Tibial artery (tissue), 4 donors: ENCODE measurements at regions of chr19 and their contacts with region 1.

Region 1: GRCh38 chr19:16324384-16325160 is at the start of gene KLF2:
- DNase-seq: peak; percentile 89 to 98
- H3K4me3 ChIP-seq: peak within 1 kb of the TSS; percentile 96 to 99
- H3K27ac ChIP-seq: peak within 1 kb of the TSS; percentile 99
- H3K4me1 ChIP-seq: peaks cover 0 to 39% (median 28%) of the 10 kb centered on the region in 4 donors
- H3K27me3 ChIP-seq: no peaks in the 10 kb centered on the region
- CTCF ChIP-seq: no peak

Region 2: GRCh38 chr19:16247353-16248182 is 77.0 kb before region 1 on chr19:
- intact Hi-C with region 1: loop called (anchors 5 kb)
- DNase-seq: peak; percentile 85 to 89
- H3K4me3 ChIP-seq: no peak overlapping the region
- H3K27ac ChIP-seq: no peak overlapping the region
- H3K4me1 ChIP-seq: peaks cover 0 to 8% (median 2%) of the 10 kb centered on the region in 4 donors
- H3K27me3 ChIP-seq: no peaks in the 10 kb centered on the region
- CTCF ChIP-seq: peak; percentile 86 to 99

Region 3: DNA sequence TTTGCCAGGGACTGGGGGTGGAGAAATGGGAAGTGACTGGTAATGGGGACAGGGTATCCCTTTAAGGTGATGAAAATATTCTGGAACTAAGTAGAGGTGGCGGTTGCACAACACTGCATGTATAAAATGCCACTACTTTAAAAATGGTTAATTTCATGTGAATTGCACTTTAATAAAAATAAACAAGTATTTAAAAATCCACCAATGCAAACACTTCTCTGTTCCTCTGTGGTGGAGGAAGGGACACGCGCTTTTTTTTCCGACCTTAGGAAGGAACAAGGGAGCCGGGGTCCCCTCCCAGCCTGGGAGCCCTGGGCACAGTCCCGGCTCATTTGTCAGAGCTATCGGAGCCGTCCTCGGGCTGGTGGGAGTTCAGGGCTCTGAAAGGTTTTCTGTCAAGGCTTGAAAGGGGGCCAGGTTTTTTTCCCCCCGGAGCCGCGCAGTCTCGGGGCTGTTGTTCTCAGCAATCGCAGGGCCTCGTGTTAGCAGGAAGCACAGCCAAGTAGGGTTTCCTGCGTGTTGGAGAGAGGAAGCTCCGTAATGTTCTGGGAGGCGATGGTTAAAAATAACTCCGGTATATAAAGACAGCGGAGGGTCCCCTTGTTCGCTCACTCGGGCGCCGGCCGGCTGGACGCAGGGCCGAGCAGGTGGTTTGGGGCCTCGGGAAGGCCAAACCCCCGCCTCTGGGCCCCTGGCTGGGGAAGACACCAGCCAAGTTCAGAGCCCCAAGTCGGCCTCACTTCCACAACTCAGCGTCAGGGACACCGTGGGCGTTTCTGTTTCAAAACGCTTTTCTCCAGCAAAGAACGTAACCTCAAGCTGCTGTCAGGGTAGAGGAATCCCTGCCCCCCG is 41.1 kb before region 1 on chr19:
- intact Hi-C with region 1: loop called (anchors 2 kb)
- DNase-seq: peak; percentile 93 to 94
- H3K4me3 ChIP-seq: peak overlapping the region; percentile 29 to 46
- H3K27ac ChIP-seq: peak overlapping the region; percentile 83 to 90
- H3K4me1 ChIP-seq: peaks cover 7 to 74% (median 45%) of the 10 kb centered on the region in 4 donors
- H3K27me3 ChIP-seq: no peaks in the 10 kb centered on the region
- CTCF ChIP-seq: no peak